B cell (primary cell): ENCODE measurements at regions of chr1 and their contacts with region 1.

Region 1: GRCh38 chr1:16613185-16614147 is at the start of gene NBPF1:
- DNase-seq: peak; percentile 94
- ATAC-seq: peak; percentile 95
- H3K4me3 ChIP-seq: peak within 1 kb of the TSS; percentile 65 to 82 (median 67)
- H3K4me3 Mint-ChIP-seq: no peak within 1 kb of the TSS
- H3K27ac ChIP-seq: peak within 1 kb of the TSS; percentile 16 to 57
- H3K27ac Mint-ChIP-seq: no peak within 1 kb of the TSS
- H3K4me1 ChIP-seq: peaks cover 21% of the 10 kb centered on the region in 2 donors
- H3K4me1 Mint-ChIP-seq: no peaks in the 10 kb centered on the region
- H3K27me3 ChIP-seq: peaks cover 0 to 8% (median 5%) of the 10 kb centered on the region in 4 experiments
- H3K27me3 Mint-ChIP-seq: no peaks in the 10 kb centered on the region
- CTCF ChIP-seq: no peak
- total RNA-seq, gene NBPF1: 64.1 and 66.3 TPM in 2 replicates

Region 2: DNA sequence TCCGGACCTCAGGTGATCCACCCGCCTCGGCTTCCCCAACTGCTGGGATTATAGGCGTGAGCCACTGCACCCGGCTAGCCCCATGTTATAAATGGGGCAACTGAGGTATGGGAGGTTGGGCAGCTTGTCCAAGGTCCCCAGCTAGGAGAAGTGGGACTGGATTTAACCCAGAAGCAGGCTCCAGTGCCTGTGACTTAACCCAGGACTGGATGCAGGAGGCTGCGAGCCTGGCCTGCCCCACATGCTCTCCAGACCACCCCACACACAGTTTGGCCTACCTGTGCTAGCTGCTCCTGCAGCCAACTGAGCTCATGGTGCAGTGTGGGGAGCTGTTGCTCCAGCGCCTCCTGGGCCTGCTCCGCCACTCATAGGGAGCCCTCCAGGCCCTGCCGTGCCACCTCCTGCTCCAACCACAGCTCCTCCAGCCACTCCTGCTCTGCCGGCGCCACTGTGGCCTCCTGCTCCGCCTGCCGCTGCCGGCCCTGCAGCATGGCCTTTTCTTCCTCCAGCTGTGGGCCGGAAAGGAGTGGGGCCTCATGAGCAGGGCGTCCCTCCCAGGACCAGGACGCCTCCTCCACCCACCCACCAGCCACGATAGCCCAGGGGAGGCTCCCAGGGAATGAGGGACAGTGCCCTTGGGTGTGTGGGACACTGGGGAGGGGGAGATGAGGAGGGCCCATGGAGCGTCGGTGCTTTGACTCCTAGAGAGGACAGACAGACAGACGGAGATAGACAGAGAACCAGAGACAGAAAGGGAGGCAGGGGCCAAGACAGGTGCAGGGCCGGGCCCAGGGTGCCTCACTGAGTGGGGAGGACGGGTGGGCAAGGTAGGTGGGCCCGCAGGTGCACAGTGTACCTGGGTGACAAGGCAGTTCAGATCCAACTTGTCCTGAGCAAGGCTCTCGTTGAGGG is 12.3 kb after region 1 on chr1:
- CTCF ChIA-PET with region 1: interaction called, 23 read pairs
- POLR2A ChIA-PET with region 1: interaction called, 5 read pairs
- intact Hi-C with region 1: loop called (anchors 1 kb)
- DNase-seq: peak; percentile 44
- ATAC-seq: no peak
- H3K4me3 ChIP-seq: no peak overlapping the region
- H3K4me3 Mint-ChIP-seq: no peak overlapping the region
- H3K27ac ChIP-seq: no peak overlapping the region
- H3K27ac Mint-ChIP-seq: no peak overlapping the region
- H3K4me1 ChIP-seq: no peaks in the 10 kb centered on the region
- H3K4me1 Mint-ChIP-seq: no peaks in the 10 kb centered on the region
- H3K27me3 ChIP-seq: no peaks in the 10 kb centered on the region
- H3K27me3 Mint-ChIP-seq: no peaks in the 10 kb centered on the region
- CTCF ChIP-seq: no peak

Region 3: GRCh38 chr1:16644193-16644481 is 30.7 kb after region 1 on chr1:
- CTCF ChIA-PET with region 1: interaction called, 3 read pairs
- POLR2A ChIA-PET with region 1: interaction called, 11 read pairs
- intact Hi-C with region 1: no loop called
- DNase-seq: no peak
- ATAC-seq: no peak
- H3K4me3 ChIP-seq: peak overlapping the region; percentile 69 to 90 (median 78)
- H3K4me3 Mint-ChIP-seq: no peak overlapping the region
- H3K27ac ChIP-seq: peak overlapping the region; percentile 82 to 86
- H3K27ac Mint-ChIP-seq: no peak overlapping the region
- H3K4me1 ChIP-seq: peaks cover 29 to 44% of the 10 kb centered on the region in 2 donors
- H3K4me1 Mint-ChIP-seq: peaks cover 10% of the 10 kb centered on the region
- H3K27me3 ChIP-seq: peaks cover 0 to 9% (median 0%) of the 10 kb centered on the region in 4 experiments
- H3K27me3 Mint-ChIP-seq: no peaks in the 10 kb centered on the region
- CTCF ChIP-seq: no peak